ENCODE measurements at regions of chr10 and their contacts with region 1.

Region 1: DNA sequence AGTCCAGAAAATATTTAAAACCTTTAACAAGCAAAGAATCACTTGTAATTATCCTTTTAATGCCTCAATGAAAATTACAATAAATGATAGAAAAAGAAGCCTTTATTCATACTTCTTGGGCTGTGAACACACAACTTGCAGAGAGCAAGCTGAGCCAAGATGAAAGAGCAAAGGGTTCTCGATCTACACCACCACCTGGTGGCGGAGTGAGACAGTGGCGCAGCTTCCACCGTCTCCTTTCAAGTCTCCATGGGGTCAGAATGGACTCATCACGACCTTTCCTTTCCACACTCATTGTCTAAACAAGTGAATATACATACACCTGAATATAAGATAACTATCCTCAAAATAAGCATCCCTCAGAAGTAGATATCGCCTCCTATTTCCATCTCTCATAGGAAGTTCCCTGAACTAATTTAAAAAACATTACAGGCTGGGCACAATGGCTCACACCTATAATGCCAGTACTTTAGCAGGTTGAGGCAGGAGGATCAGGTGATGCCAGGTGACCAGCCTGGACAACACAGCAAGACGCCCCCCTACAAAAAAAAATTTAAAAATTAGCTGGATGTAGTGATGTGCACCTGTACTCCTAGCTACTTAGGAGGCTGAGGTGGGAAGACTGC is 40.7 kb downstream of the ATE1 start:
- DNase-seq: no peak

Region 2: GRCh38 chr10:120948889-120949608 is 938.1 kb before region 1 on chr10:
- intact Hi-C with region 1: loop called in 1 of 2 experiments (anchors 5 kb)
- DNase-seq: peak; percentile 91

Region 3: GRCh38 chr10:122126763-122127659 is 239.9 kb after region 1 on chr10:
- intact Hi-C with region 1: no loop called
- DNase-seq: no peak

Measured in posterior vena cava (tissue), 2 donors.